Caco-2 (cell line): ENCODE measurements at regions of chr12 and their contacts with region 1.

Region 1: GRCh38 chr12:101759396-101760047 is 20.3 kb upstream of the SYCP3 start:
- DNase-seq: peak in 1 of 2 experiments; percentile 33
- H3K4me3 ChIP-seq: no peak overlapping the region
- H3K4me3 Mint-ChIP-seq: no peak overlapping the region
- H3K27ac Mint-ChIP-seq: no peak overlapping the region
- H3K4me1 ChIP-seq: no peaks in the 10 kb centered on the region
- H3K4me1 Mint-ChIP-seq: peaks cover 5% of the 10 kb centered on the region
- H3K27me3 ChIP-seq: no peaks in the 10 kb centered on the region
- H3K27me3 Mint-ChIP-seq: no peaks in the 10 kb centered on the region
- CTCF ChIP-seq: peak; percentile 59 to 73

Region 2: GRCh38 chr12:101414533-101415119 is 344.9 kb before region 1 on chr12:
- CTCF ChIA-PET with region 1: interaction called, 7 read pairs
- POLR2A ChIA-PET with region 1: no interaction called
- intact Hi-C with region 1: loop called (anchors 1 kb)
- DNase-seq: peak in 1 of 2 experiments; percentile 65
- H3K4me3 ChIP-seq: no peak overlapping the region
- H3K4me3 Mint-ChIP-seq: no peak overlapping the region
- H3K27ac Mint-ChIP-seq: no peak overlapping the region
- H3K4me1 ChIP-seq: no peaks in the 10 kb centered on the region
- H3K4me1 Mint-ChIP-seq: no peaks in the 10 kb centered on the region
- H3K27me3 ChIP-seq: no peaks in the 10 kb centered on the region
- H3K27me3 Mint-ChIP-seq: no peaks in the 10 kb centered on the region
- CTCF ChIP-seq: peak; percentile 42 to 58

Region 3: GRCh38 chr12:101490286-101490920 is 269.1 kb before region 1 on chr12:
- CTCF ChIA-PET with region 1: interaction called, 3 read pairs
- POLR2A ChIA-PET with region 1: no interaction called
- intact Hi-C with region 1: loop called (anchors 5 kb)
- DNase-seq: peak; percentile 44 to 55
- H3K4me3 ChIP-seq: no peak overlapping the region
- H3K4me3 Mint-ChIP-seq: no peak overlapping the region
- H3K27ac Mint-ChIP-seq: no peak overlapping the region
- H3K4me1 ChIP-seq: 0 out of 2 replicates have a peak, but pooled peaks cover 3% of the 10 kb centered on the region
- H3K4me1 Mint-ChIP-seq: no peaks in the 10 kb centered on the region
- H3K27me3 ChIP-seq: no peaks in the 10 kb centered on the region
- H3K27me3 Mint-ChIP-seq: no peaks in the 10 kb centered on the region
- CTCF ChIP-seq: peak; percentile 58 to 80

Region 4: GRCh38 chr12:101670007-101670687 is 89.4 kb before region 1 on chr12:
- CTCF ChIA-PET with region 1: no interaction called
- POLR2A ChIA-PET with region 1: no interaction called
- intact Hi-C with region 1: loop called (anchors 1 kb)
- DNase-seq: peak; percentile 42 to 58
- H3K4me3 ChIP-seq: no peak overlapping the region
- H3K4me3 Mint-ChIP-seq: no peak overlapping the region
- H3K27ac Mint-ChIP-seq: no peak overlapping the region
- H3K4me1 ChIP-seq: peaks cover 7% of the 10 kb centered on the region; the same call in 1 of the 2 replicates
- H3K4me1 Mint-ChIP-seq: peaks cover 22% of the 10 kb centered on the region
- H3K27me3 ChIP-seq: no peaks in the 10 kb centered on the region
- H3K27me3 Mint-ChIP-seq: peaks cover 2% of the 10 kb centered on the region
- CTCF ChIP-seq: peak; percentile 62 to 64